A549 (cell line): ENCODE measurements at regions of chr7 and their contacts with region 1.

Region 1: DNA sequence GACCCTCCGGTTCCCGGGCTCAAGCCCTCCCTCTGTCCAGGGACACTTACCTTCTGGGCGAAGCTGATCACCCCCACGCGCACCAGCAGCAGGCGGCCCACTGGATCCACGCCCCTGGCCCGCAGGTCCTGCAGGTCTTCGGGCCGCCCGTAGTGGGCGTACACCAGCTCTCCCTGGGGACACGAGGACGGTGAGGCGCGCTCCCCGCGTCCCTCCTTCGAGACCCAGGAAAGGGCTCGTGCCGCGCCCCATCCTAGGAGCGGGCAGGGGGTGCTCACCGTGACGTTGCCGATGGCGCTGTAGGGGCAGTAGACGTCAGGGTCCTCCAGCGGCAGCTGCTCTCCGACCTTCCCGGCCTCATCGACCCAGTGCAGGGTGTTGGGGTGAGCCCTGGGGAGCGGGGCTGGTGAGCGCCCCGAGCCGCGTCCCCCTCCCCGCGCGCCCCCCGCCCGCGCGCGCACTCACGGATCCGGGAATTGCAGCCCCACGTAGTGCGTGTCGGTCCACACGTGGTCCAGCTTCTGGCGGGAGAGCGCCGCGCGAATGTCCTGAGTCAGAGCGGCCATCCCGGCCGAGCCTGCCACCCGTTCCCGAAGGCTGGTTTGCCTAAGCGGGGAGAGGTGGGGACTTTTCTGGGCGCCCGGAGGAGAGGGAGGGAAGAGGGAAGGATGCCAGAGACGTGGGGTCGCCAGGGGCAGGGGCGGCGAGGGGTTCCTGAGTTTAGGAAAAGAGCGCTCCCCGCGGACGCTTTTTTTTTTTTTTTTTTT is 8.2 kb downstream of the TFR2 start:
- DNase-seq: peak; percentile 79 to 90
- ATAC-seq: peak; percentile 88 to 93
- H3K4me3 ChIP-seq: peak overlapping the region; percentile 66
- H3K27ac ChIP-seq: peak overlapping the region; percentile 82 to 97
- H3K4me1 ChIP-seq: 0 out of 3 replicates have a peak, but pooled peaks cover 3% of the 10 kb centered on the region
- CTCF ChIP-seq: peak; percentile 43; the same call in 2 of the 3 replicates
- EP300 ChIP-seq: no peak
- POLR2A ChIP-seq: peak; percentile 62
- RAD21 ChIP-seq: peak; percentile 16 to 26; a peak in 1 of 5 replicates

Region 2: GRCh38 chr7:100611974-100612729 is 21.0 kb before region 1 on chr7 and contains the start of gene MOSPD3:
- CTCF ChIA-PET with region 1: interaction called, 69 read pairs
- POLR2A ChIA-PET with region 1: interaction called, 15 read pairs
- DNase-seq: peak; percentile 99 to 100
- ATAC-seq: peak; percentile 97
- H3K4me3 ChIP-seq: peak within 1 kb of the TSS; percentile 67
- H3K27ac ChIP-seq: peak within 1 kb of the TSS; percentile 83 to 90
- H3K4me1 ChIP-seq: peaks cover 4% of the 10 kb centered on the region; the same call in 1 of the 3 replicates
- CTCF ChIP-seq: no peak
- EP300 ChIP-seq: no peak
- POLR2A ChIP-seq: peak; percentile 43
- RAD21 ChIP-seq: no peak
- polyA plus RNA-seq, gene MOSPD3: 4.6 and 6.1 TPM in 2 replicates

Region 3: DNA sequence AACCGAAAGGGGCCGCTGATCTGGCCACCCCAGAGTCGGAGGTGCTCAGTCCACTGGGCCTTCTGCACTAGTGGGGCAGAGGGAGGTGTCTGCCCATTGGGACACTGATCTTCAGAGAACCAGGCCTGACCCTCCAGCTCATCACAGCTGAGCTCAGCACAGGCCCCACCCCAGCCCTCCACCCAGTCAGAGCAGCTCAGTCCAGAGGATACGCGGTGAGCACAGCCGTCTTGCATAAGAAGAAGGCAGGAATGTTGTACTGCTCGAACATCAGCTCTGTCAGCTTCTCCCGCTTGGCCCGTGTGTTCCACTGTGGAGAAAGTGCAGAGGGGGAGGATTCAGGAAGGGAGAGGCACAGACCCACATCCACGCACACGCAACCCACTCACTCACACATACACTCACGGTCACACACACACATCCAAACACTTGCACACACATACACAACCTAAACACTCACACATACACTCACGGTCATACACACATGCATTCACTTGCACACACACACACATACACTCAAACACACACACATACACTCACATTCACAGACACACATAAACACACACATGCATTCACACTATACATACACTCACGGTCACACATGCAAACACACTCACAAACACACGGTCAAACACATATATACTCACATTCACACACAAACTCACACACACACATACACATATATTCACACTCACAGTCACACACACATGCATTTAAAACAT is 16.9 kb after region 1 on chr7:
- CTCF ChIA-PET with region 1: interaction called, 39 read pairs
- POLR2A ChIA-PET with region 1: no interaction called
- DNase-seq: no peak
- ATAC-seq: no peak; a peak in 1 of 6 replicates
- H3K4me3 ChIP-seq: no peak overlapping the region
- H3K27ac ChIP-seq: no peak overlapping the region
- H3K4me1 ChIP-seq: peaks cover 6% of the 10 kb centered on the region; the same call in 2 of the 3 replicates
- CTCF ChIP-seq: no peak
- EP300 ChIP-seq: no peak
- POLR2A ChIP-seq: no peak
- RAD21 ChIP-seq: no peak

Region 4: DNA sequence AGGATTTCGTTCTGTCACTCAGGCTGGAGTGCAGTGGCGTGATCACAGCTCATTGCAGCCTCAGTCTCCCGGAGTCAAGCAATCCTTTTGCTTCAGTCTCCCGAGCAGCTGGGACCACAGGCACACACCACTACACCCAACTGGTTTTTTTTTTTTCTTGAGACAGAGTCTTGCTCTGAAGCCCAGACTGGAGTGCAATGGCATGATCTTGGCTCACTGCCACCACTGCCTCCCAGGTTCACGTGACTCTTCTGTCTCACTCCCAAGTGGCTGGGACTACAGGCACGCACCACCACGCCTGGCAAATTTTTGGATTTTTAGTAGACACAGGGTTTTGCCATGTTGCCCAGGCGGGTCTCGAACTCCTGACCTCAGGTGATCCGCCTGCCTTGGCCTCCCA is 29.2 kb after region 1 on chr7:
- CTCF ChIA-PET with region 1: interaction called, 25 read pairs
- POLR2A ChIA-PET with region 1: interaction called, 3 read pairs
- DNase-seq: no peak
- ATAC-seq: no peak
- H3K4me3 ChIP-seq: no peak overlapping the region
- H3K27ac ChIP-seq: no peak overlapping the region
- H3K4me1 ChIP-seq: no peaks in the 10 kb centered on the region
- CTCF ChIP-seq: no peak
- EP300 ChIP-seq: no peak
- POLR2A ChIP-seq: no peak
- RAD21 ChIP-seq: no peak

Region 5: DNA sequence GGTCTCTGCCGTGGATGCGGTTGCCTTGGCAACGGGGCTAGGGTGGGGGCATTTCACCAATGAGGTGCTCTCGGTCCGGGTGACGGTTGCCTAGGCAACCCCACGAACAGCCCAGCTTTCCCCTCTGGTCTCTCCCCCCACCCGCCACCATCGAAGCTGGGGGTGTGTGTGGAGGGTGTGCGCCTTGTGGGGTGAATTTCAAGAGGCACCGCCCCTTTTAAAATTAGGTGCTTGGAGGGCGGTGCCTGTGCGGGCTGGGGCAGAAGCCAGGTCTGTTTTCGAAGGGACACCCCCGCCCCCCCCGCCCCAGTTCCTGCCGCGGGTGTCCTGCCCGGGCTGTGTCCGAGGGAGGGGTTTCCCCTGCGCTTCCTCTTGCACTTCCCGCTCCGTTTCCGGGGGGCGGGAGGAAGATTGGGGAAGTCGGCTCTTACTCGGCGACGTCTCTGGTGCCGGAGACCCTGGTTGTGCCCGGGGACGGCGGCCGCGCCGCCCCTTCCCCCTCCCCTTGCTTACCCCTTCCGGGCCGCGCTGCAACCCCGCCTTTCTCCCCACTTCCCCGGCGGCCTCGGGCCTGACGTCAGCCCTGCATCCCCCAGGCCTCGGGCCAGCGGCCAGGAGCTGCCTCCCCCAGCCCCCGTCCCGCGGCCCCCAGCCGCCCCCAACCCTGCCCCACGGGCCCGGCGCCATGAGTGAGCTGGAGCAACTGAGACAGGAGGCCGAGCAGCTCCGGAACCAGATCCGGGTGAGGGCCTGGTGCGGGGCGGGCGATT is 42.6 kb after region 1 on chr7:
- CTCF ChIA-PET with region 1: interaction called, 33 read pairs
- POLR2A ChIA-PET with region 1: interaction called, 5 read pairs
- DNase-seq: peak in 1 of 2 experiments; percentile 35
- ATAC-seq: no peak
- H3K4me3 ChIP-seq: peak overlapping the region; percentile 77
- H3K27ac ChIP-seq: peak overlapping the region; percentile 87 to 99; a peak in 5 of 6 replicates
- H3K4me1 ChIP-seq: peaks cover 27% of the 10 kb centered on the region
- CTCF ChIP-seq: no peak
- EP300 ChIP-seq: no peak
- POLR2A ChIP-seq: no peak
- RAD21 ChIP-seq: no peak

Region 6: DNA sequence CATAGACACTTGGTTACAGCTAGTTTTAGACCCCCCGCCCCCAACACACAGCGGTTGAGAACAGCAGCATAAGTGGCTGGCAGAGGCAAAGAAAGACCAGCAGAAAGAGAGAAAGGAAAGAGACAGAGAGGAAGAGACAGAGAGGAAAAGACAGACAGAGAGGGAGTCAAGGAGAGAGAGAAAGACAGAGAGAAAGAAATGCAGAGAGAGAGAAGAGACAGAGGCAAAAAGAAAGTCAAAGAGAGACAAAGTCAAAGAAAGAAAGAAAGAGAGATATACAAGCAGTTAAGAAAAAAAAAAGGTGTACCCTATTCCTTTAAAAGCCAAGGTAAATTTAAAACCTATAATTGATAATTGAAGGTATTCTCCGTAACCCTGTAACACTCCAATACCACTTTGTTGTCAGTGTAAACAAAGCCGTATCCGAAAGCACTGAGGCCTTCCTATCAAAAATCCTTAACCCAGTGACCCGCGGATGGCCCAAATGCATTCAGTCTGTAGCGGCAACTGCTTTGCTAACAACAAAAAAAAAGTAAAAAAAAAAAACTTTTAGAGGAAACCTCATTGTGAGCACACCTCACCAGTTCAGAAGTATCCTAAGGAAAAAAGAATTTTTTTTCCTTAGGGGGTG is 207.5 kb after region 1 on chr7:
- CTCF ChIA-PET with region 1: no interaction called
- POLR2A ChIA-PET with region 1: no interaction called
- DNase-seq: no peak
- ATAC-seq: no peak
- H3K4me3 ChIP-seq: no peak overlapping the region
- H3K27ac ChIP-seq: no peak overlapping the region
- H3K4me1 ChIP-seq: peaks cover 14% of the 10 kb centered on the region
- CTCF ChIP-seq: no peak
- EP300 ChIP-seq: no peak
- POLR2A ChIP-seq: no peak
- RAD21 ChIP-seq: no peak